Caco-2 (cell line): ENCODE measurements at regions of chr1 and their contacts with region 1.

Region 1: GRCh38 chr1:15994590-15995351 is 9.3 kb upstream of the SRARP start:
- DNase-seq: peak; percentile 61 to 67
- H3K4me3 ChIP-seq: no peak overlapping the region
- H3K4me3 Mint-ChIP-seq: no peak overlapping the region
- H3K27ac Mint-ChIP-seq: no peak overlapping the region
- H3K4me1 ChIP-seq: no peaks in the 10 kb centered on the region
- H3K4me1 Mint-ChIP-seq: no peaks in the 10 kb centered on the region
- H3K27me3 ChIP-seq: no peaks in the 10 kb centered on the region
- H3K27me3 Mint-ChIP-seq: no peaks in the 10 kb centered on the region
- CTCF ChIP-seq: peak; percentile 56 to 74

Region 2: GRCh38 chr1:15788624-15789301 is 206.0 kb before region 1 on chr1:
- CTCF ChIA-PET with region 1: interaction called, 6 read pairs
- POLR2A ChIA-PET with region 1: no interaction called
- intact Hi-C with region 1: loop called (anchors 1 kb)
- DNase-seq: no peak
- H3K4me3 ChIP-seq: no peak overlapping the region
- H3K4me3 Mint-ChIP-seq: no peak overlapping the region
- H3K27ac Mint-ChIP-seq: peak overlapping the region; percentile 71
- H3K4me1 ChIP-seq: peaks cover 44% of the 10 kb centered on the region
- H3K4me1 Mint-ChIP-seq: peaks cover 33% of the 10 kb centered on the region
- H3K27me3 ChIP-seq: no peaks in the 10 kb centered on the region
- H3K27me3 Mint-ChIP-seq: no peaks in the 10 kb centered on the region
- CTCF ChIP-seq: no peak

Region 3: DNA sequence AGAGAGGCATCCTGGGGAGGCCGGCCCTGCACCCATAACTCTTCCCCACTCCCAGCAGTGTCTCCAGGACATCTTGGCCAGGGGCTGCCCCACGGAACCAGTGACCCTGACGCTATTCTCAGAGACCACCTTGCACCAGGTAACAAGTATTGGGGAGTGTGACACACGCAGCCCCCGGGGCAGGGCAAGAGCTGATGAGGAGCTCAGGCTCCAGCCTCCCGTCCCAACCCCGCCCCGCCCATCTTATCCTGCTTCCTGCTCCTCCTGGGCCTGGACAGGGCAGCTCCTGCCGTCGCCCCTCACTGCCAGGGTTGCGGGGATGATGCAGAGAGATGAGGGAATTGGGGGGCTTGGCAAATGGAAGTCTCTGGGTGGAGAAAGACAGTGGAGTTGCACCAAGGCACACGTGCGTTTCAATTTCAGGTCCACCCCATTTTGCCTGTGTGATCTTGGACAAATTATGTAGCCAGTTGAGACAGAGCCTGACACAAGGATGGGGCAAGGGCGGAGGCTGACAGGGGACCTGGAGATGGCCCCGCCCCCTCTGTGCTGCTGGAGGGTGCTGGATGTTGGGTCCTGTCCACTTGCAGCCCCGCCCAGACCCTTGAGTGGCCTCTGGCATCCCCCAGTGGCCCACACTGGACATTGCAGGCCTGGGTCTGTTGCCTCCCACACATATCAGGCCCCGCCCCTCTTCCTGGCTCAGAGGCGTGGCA is 37.8 kb after region 1 on chr1:
- CTCF ChIA-PET with region 1: no interaction called
- POLR2A ChIA-PET with region 1: no interaction called
- intact Hi-C with region 1: no loop called
- DNase-seq: peak; percentile 86
- H3K4me3 ChIP-seq: no peak overlapping the region
- H3K4me3 Mint-ChIP-seq: no peak overlapping the region
- H3K27ac Mint-ChIP-seq: no peak overlapping the region
- H3K4me1 ChIP-seq: no peaks in the 10 kb centered on the region
- H3K4me1 Mint-ChIP-seq: no peaks in the 10 kb centered on the region
- H3K27me3 ChIP-seq: no peaks in the 10 kb centered on the region
- H3K27me3 Mint-ChIP-seq: no peaks in the 10 kb centered on the region
- CTCF ChIP-seq: peak; percentile 69 to 78